ENCODE measurements at regions of chr16 and their contacts with region 1.

Region 1: DNA sequence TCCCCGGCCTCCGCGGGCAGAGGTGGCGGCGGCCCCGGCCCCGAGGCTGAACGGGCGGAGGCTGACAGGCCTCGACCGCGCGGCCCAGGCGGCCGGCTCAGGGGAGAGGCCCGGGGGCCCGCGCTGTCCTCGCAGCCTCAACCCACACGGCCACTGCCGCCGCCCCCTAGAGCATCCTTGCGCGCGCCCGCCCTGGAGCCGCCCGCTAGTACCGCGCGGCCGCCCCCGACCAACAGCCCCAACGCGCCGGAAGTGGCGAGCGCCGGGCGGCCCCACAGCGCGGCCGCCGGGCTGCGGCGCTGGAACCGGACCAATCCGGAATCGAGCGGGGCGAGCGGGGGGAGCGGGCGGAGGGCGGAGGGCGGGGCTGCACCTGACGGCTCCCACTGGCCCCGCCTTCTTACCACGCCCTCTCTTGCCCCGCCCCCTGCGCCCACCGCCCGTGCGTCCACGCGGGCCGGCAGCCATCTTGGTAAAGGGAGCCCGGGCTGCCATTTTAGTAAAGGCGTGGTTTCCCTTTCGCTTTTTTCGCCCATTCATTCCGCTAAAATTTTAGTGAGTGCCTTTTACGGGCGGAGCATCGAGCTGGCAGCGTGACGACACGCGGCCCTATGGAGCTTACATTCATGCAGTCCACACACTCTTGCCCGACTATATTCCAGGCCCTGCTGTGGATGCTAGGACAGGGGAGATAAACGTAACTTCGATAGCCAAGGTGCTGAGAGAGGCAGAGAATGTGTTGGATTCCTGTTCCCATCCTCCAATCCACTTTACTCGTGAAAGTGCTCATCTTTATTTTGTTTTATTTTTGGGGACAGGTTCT is at the start of gene XPO6:
- DNase-seq: peak; percentile 92 to 99 (median 96)

Region 2: GRCh38 chr16:28291873-28292660 is 80.1 kb after region 1 on chr16 and contains the start of gene SBK1:
- intact Hi-C with region 1: loop called (anchors 10 kb)
- DNase-seq: peak; percentile 62 to 96 (median 68)

Measured in posterior cingulate gyrus (tissue), 11 donors.